B cell (primary cell): ENCODE measurements at regions of chr1 and their contacts with region 1.

Region 1: DNA sequence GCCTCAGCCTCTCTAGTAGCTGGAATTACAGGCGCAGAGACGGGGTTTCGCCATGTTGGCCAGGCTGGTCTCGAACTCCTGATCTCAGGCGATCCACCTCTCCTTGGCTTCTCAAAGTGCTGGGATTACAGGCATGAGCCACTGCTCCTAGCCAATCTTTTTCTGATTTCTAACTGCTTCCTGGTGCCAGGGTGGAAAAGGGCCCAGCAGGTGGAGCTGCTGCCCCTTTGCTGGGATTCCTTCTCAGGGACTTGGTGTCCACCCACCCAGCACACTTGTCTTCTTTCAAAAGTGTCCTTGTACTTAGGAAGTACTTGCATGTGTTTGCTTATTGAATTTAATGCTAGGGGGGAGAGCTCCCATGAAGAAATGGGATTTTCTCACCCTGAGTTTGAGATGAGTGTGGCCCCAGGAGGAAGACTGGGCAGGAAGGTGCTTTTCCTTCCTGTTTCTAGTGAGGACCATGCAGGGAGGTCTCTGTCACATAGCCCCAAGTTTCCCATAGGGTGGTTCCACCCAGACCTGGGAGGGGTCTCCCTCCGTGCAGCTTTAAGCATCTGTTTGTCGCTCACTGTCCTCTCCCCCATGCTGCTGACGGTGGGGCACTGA is 14.2 kb downstream of the UTP11 start:
- DNase-seq: peak; percentile 38
- ATAC-seq: no peak
- H3K4me3 ChIP-seq: no peak overlapping the region
- H3K4me3 Mint-ChIP-seq: no peak overlapping the region
- H3K27ac ChIP-seq: no peak overlapping the region
- H3K27ac Mint-ChIP-seq: no peak overlapping the region
- H3K4me1 ChIP-seq: peaks cover 5 to 13% of the 10 kb centered on the region in 2 donors
- H3K4me1 Mint-ChIP-seq: peaks cover 19% of the 10 kb centered on the region
- H3K27me3 ChIP-seq: no peaks in the 10 kb centered on the region
- H3K27me3 Mint-ChIP-seq: peaks cover 4% of the 10 kb centered on the region
- CTCF ChIP-seq: peak; percentile 31

Region 2: GRCh38 chr1:38071312-38072256 is 44.9 kb after region 1 on chr1:
- CTCF ChIA-PET with region 1: interaction called, 15 read pairs
- POLR2A ChIA-PET with region 1: no interaction called
- intact Hi-C with region 1: no loop called
- DNase-seq: no peak
- ATAC-seq: peak; percentile 45
- H3K4me3 ChIP-seq: no peak overlapping the region
- H3K4me3 Mint-ChIP-seq: no peak overlapping the region
- H3K27ac ChIP-seq: no peak overlapping the region
- H3K27ac Mint-ChIP-seq: no peak overlapping the region
- H3K4me1 ChIP-seq: peaks cover 0 to 6% of the 10 kb centered on the region in 2 donors
- H3K4me1 Mint-ChIP-seq: peaks cover 9% of the 10 kb centered on the region
- H3K27me3 ChIP-seq: peaks cover 0 to 17% (median 0%) of the 10 kb centered on the region in 4 experiments
- H3K27me3 Mint-ChIP-seq: peaks cover 18% of the 10 kb centered on the region
- CTCF ChIP-seq: no peak